Activated CD4-positive, alpha-beta memory T cell treated with anti-CD3 and anti-CD28 coated beads for 36 hours (primary cell): ENCODE measurements at regions of chr5 and their contacts with region 1.

Region 1: GRCh38 chr5:157130925-157131324 is 11.7 kb downstream of the MED7 start:
- DNase-seq: no peak
- H3K4me3 Mint-ChIP-seq: no peak overlapping the region
- H3K27ac Mint-ChIP-seq: no peak overlapping the region
- H3K4me1 Mint-ChIP-seq: peaks cover 23% of the 10 kb centered on the region
- H3K27me3 Mint-ChIP-seq: no peaks in the 10 kb centered on the region

Region 2: GRCh38 chr5:155136216-155136850 is 1994.6 kb before region 1 on chr5:
- CTCF ChIA-PET with region 1: interaction called, 4 read pairs
- POLR2A ChIA-PET with region 1: no interaction called
- intact Hi-C with region 1: loop called (anchors 10 kb)
- DNase-seq: no peak
- H3K4me3 Mint-ChIP-seq: no peak overlapping the region
- H3K27ac Mint-ChIP-seq: no peak overlapping the region
- H3K4me1 Mint-ChIP-seq: no peaks in the 10 kb centered on the region
- H3K27me3 Mint-ChIP-seq: peaks cover 25% of the 10 kb centered on the region

Region 3: DNA sequence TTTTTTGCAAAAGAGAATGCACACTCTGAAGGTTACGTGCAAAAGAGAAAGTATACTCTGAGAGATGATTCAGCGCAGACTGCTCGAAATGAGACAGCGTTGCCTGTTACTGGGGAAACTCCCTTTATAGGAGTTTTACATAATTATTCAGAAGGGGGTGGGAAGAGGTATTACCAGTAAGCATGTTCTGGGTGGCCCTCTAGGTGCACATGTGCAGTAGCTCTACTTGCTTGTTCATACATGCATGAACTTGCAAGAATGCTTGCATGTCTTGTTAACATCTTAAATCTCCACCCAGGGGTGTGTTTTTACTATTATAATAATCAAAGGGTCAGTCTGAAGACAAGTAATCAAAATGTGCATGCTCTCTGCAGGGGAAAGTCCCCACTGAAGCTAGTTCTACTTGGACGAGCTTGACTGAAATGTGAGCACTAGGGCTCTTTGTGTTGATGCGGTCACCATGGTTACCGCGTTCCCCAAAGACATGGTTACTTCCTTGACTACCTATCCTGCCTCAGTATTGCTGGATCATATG is 728.5 kb before region 1 on chr5:
- CTCF ChIA-PET with region 1: no interaction called
- POLR2A ChIA-PET with region 1: no interaction called
- intact Hi-C with region 1: loop called (anchors 1 kb)
- DNase-seq: peak; percentile 84
- H3K4me3 Mint-ChIP-seq: peak overlapping the region; percentile 13
- H3K27ac Mint-ChIP-seq: peak overlapping the region; percentile 21
- H3K4me1 Mint-ChIP-seq: peaks cover 16% of the 10 kb centered on the region
- H3K27me3 Mint-ChIP-seq: peaks cover 6% of the 10 kb centered on the region

Region 4: GRCh38 chr5:156893517-156893916 is 237.4 kb before region 1 on chr5:
- CTCF ChIA-PET with region 1: no interaction called
- POLR2A ChIA-PET with region 1: no interaction called
- intact Hi-C with region 1: loop called (anchors 5 kb)
- DNase-seq: no peak
- H3K4me3 Mint-ChIP-seq: no peak overlapping the region
- H3K27ac Mint-ChIP-seq: peak overlapping the region; percentile 18
- H3K4me1 Mint-ChIP-seq: peaks cover 33% of the 10 kb centered on the region
- H3K27me3 Mint-ChIP-seq: no peaks in the 10 kb centered on the region

Region 5: DNA sequence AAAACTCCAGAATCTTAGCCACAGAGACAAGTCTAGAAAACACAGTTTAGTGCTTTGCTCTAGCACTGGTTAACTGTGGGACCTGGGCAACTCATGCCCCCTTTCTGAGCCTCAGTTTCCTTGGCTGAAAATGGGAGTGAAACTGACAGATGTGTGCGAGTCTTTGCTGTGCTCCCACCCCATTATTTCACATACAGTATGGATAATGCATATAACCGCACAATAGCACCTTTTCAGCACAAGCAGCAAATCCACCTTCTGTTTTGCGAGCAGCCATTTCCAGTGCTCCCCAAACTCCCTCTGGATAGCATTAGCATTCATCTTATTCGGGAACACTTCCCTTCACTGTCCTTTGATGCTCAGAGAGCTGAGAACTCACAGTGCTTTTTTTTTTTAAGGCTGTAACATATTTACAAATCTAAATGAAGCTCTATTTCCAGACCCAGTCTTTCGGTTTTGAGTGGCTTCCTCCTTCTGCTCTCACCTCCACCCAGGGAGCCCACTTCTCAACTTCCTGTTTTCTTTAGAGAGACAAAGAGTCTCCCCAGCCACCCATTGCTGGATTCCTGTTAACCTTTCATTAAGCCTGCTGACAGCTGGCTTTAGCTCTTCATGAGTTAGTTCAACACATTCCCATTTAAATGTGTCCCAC is 217.1 kb before region 1 on chr5:
- CTCF ChIA-PET with region 1: no interaction called
- POLR2A ChIA-PET with region 1: no interaction called
- intact Hi-C with region 1: no loop called
- DNase-seq: peak; percentile 31
- H3K4me3 Mint-ChIP-seq: peak overlapping the region; percentile 24
- H3K27ac Mint-ChIP-seq: peak overlapping the region; percentile 86
- H3K4me1 Mint-ChIP-seq: peaks cover 36% of the 10 kb centered on the region
- H3K27me3 Mint-ChIP-seq: no peaks in the 10 kb centered on the region

Region 6: DNA sequence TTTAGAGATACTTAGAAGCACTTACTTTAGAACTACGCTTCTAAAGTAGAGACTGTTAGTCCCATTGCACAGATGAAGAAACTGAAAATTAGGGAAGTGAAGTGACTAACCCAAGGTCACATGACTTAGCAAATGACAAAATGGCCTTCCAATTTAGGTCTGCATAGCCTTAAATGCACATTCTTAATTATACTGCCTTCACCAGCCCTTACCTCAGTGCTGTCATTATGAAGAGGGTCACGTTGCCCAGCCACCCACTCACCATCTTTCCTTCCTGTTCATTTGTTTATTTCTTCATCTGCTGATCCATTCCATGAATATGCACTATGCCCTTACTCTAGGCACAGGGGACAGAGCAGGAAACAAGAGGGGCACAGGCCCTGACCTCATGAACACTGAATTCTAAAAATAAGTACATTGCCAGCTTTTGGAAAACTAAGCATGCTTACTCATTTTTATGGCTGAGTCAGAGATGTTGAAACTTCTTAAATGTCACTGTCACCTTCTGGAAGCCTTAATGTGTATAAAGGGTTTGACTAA is 30.7 kb before region 1 on chr5:
- CTCF ChIA-PET with region 1: interaction called, 5 read pairs
- POLR2A ChIA-PET with region 1: no interaction called
- intact Hi-C with region 1: loop called (anchors 2 kb)
- DNase-seq: peak; percentile 69
- H3K4me3 Mint-ChIP-seq: peak overlapping the region; percentile 27
- H3K27ac Mint-ChIP-seq: peak overlapping the region; percentile 96
- H3K4me1 Mint-ChIP-seq: peaks cover 20% of the 10 kb centered on the region
- H3K27me3 Mint-ChIP-seq: no peaks in the 10 kb centered on the region

Region 7: DNA sequence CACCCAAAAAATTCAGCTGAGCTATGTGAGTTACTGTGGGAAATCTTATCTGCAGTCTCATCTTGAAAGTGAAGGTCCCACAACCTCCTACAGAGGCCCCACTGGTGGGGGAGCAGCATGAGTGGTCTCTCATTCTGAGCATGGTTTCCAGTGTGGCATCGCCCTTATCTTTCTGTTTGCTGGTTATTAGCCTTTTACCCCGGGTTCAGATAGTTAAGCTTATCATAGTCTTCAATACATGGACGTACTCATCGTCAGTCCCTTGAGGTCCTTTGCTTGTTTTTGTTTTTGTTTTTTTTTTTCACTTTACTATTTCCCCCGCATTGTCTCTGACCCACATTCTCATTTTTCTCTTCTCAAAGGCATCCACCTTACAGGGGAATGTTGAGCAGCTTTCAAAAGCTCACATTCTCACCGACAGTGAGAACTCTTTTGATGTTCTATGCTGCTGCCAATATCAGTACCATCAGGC is 14.4 kb before region 1 on chr5:
- CTCF ChIA-PET with region 1: interaction called, 20 read pairs
- POLR2A ChIA-PET with region 1: no interaction called
- intact Hi-C with region 1: loop called (anchors 1 kb)
- DNase-seq: peak; percentile 49
- H3K4me3 Mint-ChIP-seq: peak overlapping the region; percentile 2
- H3K27ac Mint-ChIP-seq: peak overlapping the region; percentile 35
- H3K4me1 Mint-ChIP-seq: peaks cover 19% of the 10 kb centered on the region
- H3K27me3 Mint-ChIP-seq: no peaks in the 10 kb centered on the region

Region 8: DNA sequence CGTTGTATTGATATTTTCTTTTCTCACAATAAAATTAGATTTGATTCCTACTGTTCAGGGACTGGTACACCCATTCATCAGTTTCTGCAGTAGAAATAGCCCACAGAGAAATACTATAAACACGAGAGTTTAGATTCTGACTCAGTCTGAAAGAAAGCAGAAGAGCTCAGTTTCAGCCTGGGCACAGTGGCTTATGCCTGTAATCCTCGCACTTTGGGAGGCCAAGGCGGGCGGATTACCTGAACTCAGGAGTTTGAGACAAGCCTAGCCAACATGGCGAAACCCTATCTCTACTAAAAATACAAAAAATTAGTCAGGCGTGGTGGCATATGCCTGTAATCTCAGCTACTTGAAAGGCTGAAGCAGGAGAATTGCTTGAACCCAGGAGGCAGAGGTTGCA is 58.3 kb after region 1 on chr5:
- CTCF ChIA-PET with region 1: no interaction called
- POLR2A ChIA-PET with region 1: no interaction called
- intact Hi-C with region 1: no loop called
- DNase-seq: peak; percentile 76
- H3K4me3 Mint-ChIP-seq: peak overlapping the region; percentile 99
- H3K27ac Mint-ChIP-seq: peak overlapping the region; percentile 100
- H3K4me1 Mint-ChIP-seq: peaks cover 75% of the 10 kb centered on the region
- H3K27me3 Mint-ChIP-seq: no peaks in the 10 kb centered on the region

Region 9: GRCh38 chr5:158553195-158553961 is 1422.5 kb after region 1 on chr5:
- CTCF ChIA-PET with region 1: no interaction called
- POLR2A ChIA-PET with region 1: no interaction called
- intact Hi-C with region 1: no loop called
- DNase-seq: no peak
- H3K4me3 Mint-ChIP-seq: no peak overlapping the region
- H3K27ac Mint-ChIP-seq: no peak overlapping the region
- H3K4me1 Mint-ChIP-seq: no peaks in the 10 kb centered on the region
- H3K27me3 Mint-ChIP-seq: no peaks in the 10 kb centered on the region